ENCODE measurements at regions of chr15 and their contacts with region 1.

Region 1: DNA sequence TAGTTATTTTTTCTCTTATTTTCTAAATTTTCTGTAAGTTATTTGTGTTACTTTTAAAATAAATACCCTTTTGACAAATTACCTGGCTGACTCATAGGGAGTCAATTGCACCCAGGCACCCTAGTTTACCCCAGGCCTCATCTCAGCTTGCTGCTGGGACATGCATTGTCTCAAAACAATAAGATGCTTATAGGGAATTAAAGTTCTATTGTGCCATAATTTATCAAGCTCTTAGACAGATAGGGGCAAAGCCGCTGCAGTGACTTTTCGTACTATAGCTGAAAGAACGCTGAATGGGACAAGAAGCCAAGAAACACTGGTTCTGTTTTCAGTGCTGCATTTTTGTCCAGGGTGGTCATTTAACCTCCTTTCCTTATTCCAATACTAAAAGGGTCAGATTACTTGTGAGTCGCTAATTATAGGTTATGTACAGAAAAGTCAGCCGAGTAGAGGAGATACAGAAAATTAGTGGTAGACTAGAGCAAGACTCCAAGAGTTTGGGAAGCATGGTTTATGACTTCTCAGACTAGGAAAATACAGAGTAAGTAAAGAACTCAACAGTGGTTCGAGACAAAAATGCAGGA is 50.3 kb downstream of the EXD1 start:
- DNase-seq: no peak
- ATAC-seq: no peak
- H3K4me3 ChIP-seq: no peak overlapping the region
- H3K27ac ChIP-seq: no peak overlapping the region
- H3K4me1 ChIP-seq: no peaks in the 10 kb centered on the region
- H3K27me3 ChIP-seq: no peaks in the 10 kb centered on the region

Region 2: GRCh38 chr15:40852291-40852928 is 327.9 kb before region 1 on chr15:
- intact Hi-C with region 1: loop called in 1 of 4 experiments (anchors 5 kb)
- DNase-seq: no peak
- ATAC-seq: no peak
- H3K4me3 ChIP-seq: no peak overlapping the region
- H3K27ac ChIP-seq: no peak overlapping the region
- H3K4me1 ChIP-seq: no peaks in the 10 kb centered on the region
- H3K27me3 ChIP-seq: no peaks in the 10 kb centered on the region

Measured in right cardiac atrium (tissue), 5 donors.